ENCODE measurements at regions of chr18 and their contacts with region 1.

Region 1: DNA sequence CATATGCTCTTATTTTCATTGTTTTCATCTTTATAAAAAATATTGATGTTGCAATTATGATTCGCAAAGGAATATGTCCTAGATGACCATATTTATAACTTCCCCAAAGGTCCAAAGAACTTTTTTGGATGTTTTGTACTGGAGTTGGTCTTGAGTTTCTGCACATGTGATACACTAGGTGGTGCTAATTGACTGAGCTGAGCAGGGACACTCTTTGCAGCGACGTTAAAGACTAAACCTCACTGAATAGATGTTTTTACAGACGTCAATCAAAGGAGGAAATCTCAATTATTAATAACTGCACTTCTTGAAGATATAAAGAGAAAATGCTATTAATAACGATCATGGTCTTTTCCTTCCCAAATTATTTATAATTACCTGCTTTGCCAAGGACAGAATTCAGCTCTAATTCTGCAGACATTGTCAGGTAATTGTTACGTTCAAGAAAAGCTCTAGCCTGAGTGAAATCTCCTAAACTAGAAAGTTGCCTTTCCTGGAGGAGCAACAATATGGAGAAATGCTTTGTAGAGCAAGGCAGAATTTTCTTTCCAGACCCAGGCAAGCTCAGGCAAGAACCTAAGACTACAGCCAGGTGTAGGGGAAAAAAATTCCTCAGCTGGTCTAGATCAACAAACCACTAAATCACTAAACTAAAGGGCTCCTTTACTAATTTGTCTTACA is 119.3 kb upstream of the RBBP8 start:
- DNase-seq: peak; percentile 25

Region 2: DNA sequence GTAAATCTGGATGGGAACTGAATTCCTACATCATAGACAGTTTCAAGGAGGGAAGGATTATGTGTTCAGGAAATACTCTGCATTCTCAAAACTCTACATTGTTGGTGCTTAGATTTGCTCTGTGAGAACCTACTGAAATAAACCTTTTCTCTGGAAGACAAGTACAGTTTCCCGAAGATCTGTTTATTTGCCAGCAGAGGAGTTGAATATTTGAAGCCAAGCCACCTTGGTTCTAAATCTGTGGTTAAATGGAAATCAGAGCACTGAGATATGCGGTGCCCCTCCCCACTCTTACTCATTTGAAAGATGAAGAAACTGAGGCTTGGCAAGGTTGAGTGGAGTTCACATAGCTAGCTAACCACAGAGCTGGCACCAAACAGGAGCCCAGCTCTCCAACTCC is 249.8 kb before region 1 on chr18:
- in situ Hi-C with region 1: no loop called
- DNase-seq: no peak

Region 3: GRCh38 chr18:23422672-23423418 is 609.1 kb after region 1 on chr18:
- in situ Hi-C with region 1: loop called (anchors 25 kb)
- DNase-seq: peak; percentile 64

Measured in KBM-7 (cell line).